Left cardiac atrium (tissue), 4 donors: ENCODE measurements at regions of chr16 and their contacts with region 1.

Region 1: DNA sequence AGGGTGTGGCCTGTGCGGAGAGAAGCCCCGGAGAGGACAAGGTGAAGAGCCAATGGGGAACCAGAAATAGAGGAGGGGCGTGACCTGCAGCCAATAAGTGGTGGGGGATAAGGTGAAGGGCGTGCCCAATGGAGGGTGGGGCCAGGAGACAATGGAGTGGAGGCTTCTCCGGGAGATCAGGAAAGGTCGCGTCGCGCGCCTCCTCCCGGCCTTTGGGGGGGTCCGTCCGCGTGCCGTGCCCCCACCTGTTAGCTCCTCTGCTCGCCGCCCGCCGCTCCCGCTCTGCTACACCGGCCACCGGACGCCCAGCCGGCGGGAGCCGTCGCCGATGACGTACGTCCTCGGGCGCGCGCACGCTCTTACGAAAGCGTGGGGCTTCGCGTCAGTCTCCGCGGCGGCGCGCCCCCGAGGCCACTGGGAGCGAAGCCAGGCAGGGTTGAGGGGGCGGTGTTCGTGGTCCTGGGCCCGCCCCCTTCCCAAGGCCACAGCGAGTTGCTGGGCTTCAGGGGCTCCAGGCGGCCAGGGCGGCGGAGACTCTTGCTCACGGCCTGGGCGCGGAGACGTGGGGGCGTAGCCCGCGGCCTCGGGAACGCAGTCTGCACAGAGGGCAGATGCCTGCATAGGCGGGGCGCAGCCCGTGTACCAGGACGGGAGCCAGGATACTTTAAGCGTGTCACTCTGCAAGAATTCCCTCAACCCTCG is at the start of gene MATCAP1:
- DNase-seq: peak; percentile 96
- ATAC-seq: peak; percentile 94 to 96
- total RNA-seq, gene MATCAP1: 16.8 to 18.1 TPM

Region 2: GRCh38 chr16:66964049-66964448 is 219.7 kb before region 1 on chr16:
- intact Hi-C with region 1: no loop called
- DNase-seq: no peak
- ATAC-seq: peak in 1 of 2 donors; percentile 39

Region 3: GRCh38 chr16:66977341-66978113 is 206.3 kb before region 1 on chr16:
- intact Hi-C with region 1: loop called in 1 of 2 experiments (anchors 10 kb)
- DNase-seq: peak; percentile 91
- ATAC-seq: peak; percentile 96 to 98